Activated naive CD4-positive, alpha-beta T cell treated with anti-CD3 and anti-CD28 coated beads for 36 hours (primary cell): ENCODE measurements at regions of chr5 and their contacts with region 1.

Region 1: DNA sequence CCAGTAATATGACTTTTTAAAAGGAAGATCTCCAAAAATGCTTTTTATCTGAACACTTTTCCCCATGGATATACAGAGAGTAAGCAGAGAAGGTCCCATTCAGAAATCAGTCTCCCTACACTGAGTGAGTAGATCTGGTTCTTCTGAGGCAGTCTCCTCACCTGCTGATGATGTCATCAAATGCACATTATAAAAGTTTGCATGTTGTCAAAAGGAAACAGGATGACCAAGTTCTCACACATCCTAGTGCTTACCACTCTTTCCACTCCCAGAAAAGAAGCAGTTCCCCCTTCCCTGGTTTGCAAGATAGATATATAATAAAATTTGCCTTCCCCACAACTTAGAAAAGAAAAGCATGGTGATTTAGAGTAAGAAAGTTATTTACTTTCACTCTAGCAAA is 180.5 kb downstream of the RAB3C start:
- DNase-seq: no peak
- H3K4me3 Mint-ChIP-seq: no peak overlapping the region
- H3K27ac Mint-ChIP-seq: no peak overlapping the region
- H3K4me1 Mint-ChIP-seq: peaks cover 39% of the 10 kb centered on the region
- H3K27me3 Mint-ChIP-seq: no peaks in the 10 kb centered on the region

Region 2: DNA sequence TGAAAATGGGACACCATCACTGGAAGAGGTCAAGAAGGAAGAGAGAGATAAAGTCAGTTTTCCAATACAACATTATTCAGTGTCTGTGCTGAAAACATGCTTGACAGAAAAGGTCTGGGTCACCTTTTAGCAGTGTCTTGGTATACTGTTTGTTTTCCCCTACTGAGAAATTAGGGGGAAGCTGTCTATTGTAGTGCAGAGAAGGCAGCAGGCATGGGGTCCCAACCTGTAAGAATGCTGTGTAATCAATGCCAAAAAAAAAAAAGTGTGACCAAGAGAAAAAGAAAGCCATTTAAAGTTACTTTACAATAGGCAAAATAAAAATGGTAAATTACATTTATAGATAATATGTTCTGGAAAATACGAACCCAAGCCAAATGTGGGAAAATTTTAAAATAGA is 41.2 kb before region 1 on chr5:
- CTCF ChIA-PET with region 1: no interaction called
- intact Hi-C with region 1: no loop called
- DNase-seq: no peak
- H3K4me3 Mint-ChIP-seq: no peak overlapping the region
- H3K27ac Mint-ChIP-seq: no peak overlapping the region
- H3K4me1 Mint-ChIP-seq: no peaks in the 10 kb centered on the region
- H3K27me3 Mint-ChIP-seq: peaks cover 10% of the 10 kb centered on the region

Region 3: GRCh38 chr5:58751222-58751837 is 12.1 kb before region 1 on chr5:
- CTCF ChIA-PET with region 1: interaction called, 3 read pairs
- intact Hi-C with region 1: loop called (anchors 1 kb)
- DNase-seq: peak; percentile 50
- H3K4me3 Mint-ChIP-seq: no peak overlapping the region
- H3K27ac Mint-ChIP-seq: no peak overlapping the region
- H3K4me1 Mint-ChIP-seq: no peaks in the 10 kb centered on the region
- H3K27me3 Mint-ChIP-seq: peaks cover 9% of the 10 kb centered on the region

Region 4: DNA sequence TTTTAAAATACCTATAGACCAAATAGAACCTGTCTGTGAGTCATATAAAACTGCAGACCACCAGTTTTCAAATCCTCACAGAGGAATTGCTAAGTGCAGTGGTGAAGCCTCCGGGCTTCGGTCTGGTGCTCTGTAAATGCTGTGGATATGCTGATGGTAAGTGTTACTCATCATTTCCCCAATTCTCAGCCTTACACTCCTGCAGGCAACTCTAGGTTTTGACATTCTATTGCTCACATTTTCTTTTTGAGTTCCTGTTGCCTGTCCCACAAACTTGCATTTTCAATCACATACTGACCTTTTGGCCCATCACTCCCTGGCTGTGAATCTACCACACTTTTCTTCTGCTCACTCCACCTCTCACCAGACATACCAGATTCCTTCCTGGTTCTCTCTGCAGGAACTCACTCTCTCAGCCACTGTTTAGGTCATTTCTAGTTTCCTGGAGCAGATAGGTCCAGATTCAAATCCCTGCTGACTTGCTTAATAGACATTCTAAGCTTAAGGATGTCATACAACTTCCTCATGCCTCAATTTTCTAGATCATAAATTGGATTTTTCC is 12.4 kb after region 1 on chr5:
- CTCF ChIA-PET with region 1: no interaction called
- intact Hi-C with region 1: loop called (anchors 1 kb)
- DNase-seq: no peak
- H3K4me3 Mint-ChIP-seq: no peak overlapping the region
- H3K27ac Mint-ChIP-seq: no peak overlapping the region
- H3K4me1 Mint-ChIP-seq: peaks cover 9% of the 10 kb centered on the region
- H3K27me3 Mint-ChIP-seq: peaks cover 17% of the 10 kb centered on the region

Region 5: GRCh38 chr5:58794875-58795274 is 31.5 kb after region 1 on chr5:
- CTCF ChIA-PET with region 1: interaction called, 3 read pairs
- intact Hi-C with region 1: loop called (anchors 1 kb)
- DNase-seq: peak; percentile 84
- H3K4me3 Mint-ChIP-seq: no peak overlapping the region
- H3K27ac Mint-ChIP-seq: no peak overlapping the region
- H3K4me1 Mint-ChIP-seq: peaks cover 6% of the 10 kb centered on the region
- H3K27me3 Mint-ChIP-seq: peaks cover 5% of the 10 kb centered on the region

Region 6: DNA sequence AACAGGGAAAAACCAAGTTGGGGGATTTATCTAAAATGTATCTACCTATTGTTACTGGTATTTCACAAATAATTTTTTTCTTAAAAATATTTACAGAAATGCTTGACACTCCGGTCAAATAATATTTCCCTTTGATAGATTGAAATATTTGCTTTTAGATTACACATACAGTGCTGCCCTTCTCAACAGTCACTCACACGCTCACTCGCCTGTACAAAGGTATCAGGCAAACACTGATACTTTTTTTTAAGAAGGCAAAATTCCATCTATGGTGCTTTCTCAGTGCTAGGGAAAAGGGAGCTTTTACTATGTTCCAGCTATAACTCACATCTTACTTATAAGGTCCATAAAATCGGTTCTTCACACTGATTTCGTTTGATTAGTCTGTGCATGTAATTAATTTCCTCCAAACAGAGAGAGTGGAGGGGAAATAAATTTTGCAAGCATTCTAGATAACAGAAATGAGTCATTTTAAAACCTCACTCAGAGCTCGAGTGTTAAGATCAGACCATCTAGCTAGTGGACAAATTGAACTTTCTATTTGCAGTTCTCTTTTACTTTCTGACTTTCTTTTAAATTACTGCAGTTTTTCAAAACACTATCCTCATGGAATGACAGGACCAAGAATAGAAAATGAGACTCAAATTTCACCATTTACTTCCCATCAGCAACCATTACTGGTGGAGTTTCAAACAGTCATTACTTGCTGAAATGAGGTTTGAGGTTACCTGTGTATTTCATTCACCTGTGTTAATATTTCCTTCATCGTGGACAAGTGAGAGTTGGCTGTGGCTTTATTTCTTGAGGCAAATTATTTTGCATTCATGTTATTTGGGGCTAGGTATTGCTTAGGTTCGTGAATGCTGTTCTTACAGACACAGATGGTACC is 92.7 kb after region 1 on chr5:
- CTCF ChIA-PET with region 1: no interaction called
- intact Hi-C with region 1: no loop called
- DNase-seq: no peak
- H3K4me3 Mint-ChIP-seq: no peak overlapping the region
- H3K27ac Mint-ChIP-seq: no peak overlapping the region
- H3K4me1 Mint-ChIP-seq: no peaks in the 10 kb centered on the region
- H3K27me3 Mint-ChIP-seq: peaks cover 3% of the 10 kb centered on the region

Region 7: DNA sequence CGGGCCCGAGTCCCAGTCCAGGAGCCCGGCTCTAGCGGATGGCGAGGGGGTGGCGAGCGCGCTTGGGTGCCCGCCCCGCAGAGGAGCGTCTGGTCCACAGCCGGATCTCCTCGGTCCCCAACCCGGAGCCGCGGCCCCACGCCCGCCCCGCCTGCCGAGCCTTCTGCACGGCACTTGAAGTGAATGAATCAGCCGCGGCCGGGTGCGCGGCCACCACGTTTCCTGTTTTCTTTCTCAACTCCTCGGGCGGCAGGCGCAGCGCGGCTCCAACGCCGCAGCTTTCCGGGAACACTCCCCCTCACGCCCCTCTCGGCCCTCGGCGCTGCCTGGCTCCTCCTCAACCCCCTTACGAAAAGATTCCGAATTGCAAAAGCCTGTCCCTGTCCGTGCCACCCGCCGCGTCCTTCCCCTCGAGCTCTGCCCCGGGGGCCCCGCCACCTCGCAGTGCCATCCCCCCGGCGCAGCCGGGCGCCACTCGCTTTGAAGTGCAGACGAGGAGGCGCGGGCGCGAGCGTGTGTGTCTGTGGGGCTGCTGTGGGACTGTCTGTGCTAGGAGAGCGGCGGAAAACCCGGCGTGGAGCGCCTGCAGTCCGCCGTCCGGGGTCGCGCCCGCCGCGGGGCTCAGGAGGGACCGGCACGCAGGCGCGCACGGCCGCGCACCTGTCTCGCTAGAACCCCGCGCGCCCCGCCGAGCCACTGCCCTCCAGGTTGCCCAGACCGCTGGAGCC is 276.1 kb after region 1 on chr5:
- CTCF ChIA-PET with region 1: no interaction called
- intact Hi-C with region 1: no loop called
- DNase-seq: peak; percentile 90
- H3K4me3 Mint-ChIP-seq: peak overlapping the region; percentile 94
- H3K27ac Mint-ChIP-seq: peak overlapping the region; percentile 96
- H3K4me1 Mint-ChIP-seq: peaks cover 44% of the 10 kb centered on the region
- H3K27me3 Mint-ChIP-seq: no peaks in the 10 kb centered on the region